Testis (tissue), 5 donors: ENCODE measurements at regions of chr11 and their contacts with region 1.

Region 1: GRCh38 chr11:75525596-75526541 is at the start of gene GDPD5:
- DNase-seq: peak; percentile 79
- H3K4me3 ChIP-seq: peak within 1 kb of the TSS; percentile 64 to 71
- H3K27ac ChIP-seq: no peak within 1 kb of the TSS
- H3K4me1 ChIP-seq: peaks cover 5% of the 10 kb centered on the region
- H3K27me3 ChIP-seq: no peaks in the 10 kb centered on the region
- CTCF ChIP-seq: peak in 2 of 3 experiments; percentile 30 to 50
- POLR2A ChIP-seq: no peak
- total RNA-seq, gene GDPD5: 43.3 to 99.5 TPM

Region 2: DNA sequence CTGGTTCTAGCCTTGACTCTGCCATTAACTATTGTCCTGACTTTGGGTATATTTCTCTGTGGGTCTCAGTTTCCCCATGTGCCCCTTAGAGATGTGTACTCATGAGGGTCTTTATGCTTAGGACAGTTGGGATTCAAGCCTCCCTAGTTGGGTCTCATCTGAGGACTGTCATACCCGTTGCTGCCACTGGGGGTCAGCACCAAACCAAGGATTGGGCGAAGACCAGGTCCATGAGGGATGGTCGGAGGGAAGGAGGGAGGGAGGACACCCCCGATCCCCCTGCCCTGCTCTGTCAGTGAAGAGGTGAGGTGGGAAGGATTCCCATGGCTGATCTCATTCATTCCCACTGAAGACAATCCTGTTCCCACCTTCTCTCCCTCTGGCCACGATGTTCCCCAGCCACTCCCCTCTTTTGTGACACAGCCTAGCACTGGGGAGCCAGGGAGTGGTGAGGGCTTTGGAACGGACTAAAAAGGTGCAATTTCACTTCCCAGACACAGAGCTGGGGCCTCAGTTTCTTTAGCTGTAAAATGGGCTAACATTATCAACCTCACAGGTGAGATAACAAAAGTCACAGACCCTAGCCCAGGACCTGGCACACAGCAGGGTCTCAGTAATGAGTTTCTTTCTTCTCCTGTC is 80.4 kb before region 1 on chr11:
- intact Hi-C with region 1: loop called (anchors 5 kb)
- DNase-seq: peak; percentile 81
- H3K4me3 ChIP-seq: no peak overlapping the region
- H3K27ac ChIP-seq: no peak overlapping the region
- H3K4me1 ChIP-seq: no peaks in the 10 kb centered on the region
- H3K27me3 ChIP-seq: no peaks in the 10 kb centered on the region
- CTCF ChIP-seq: peak; percentile 90 to 95 (median 92)
- POLR2A ChIP-seq: no peak